K562 (cell line): ENCODE measurements at regions of chr20 and their contacts with region 1.

Region 1: DNA sequence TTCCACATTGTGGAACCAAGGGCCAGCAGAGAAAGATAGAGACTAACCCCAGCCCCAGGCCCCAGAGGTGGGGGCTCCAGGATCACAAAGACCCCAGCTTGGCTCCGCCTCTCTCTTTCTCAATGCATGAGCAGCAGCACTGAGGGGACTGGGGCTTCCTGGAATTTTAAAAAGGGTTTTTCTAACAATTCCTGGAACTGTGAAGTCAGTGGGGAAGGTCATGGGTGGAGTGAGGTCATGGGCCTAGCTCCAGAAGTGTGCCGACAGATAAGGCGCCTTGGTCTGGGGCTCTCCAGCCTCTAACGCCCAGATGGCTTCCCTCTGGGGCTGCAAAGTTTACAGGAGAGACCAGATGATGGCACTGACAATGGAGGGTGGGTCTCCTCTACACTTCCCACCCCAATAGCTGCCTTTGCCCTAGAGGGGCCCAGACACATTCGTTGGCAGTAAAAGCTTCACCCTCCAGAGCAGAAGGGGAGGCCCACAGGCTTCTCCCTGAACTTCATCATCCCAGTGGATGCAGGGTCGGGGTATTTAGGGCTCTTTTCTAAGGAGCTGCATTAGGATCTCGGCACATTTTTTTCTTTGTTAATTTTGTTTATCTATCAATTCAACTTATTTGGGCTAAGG is 46.9 kb upstream of the CD93 start:
- DNase-seq: peak; percentile 82 to 96 (median 84)
- ATAC-seq: peak; percentile 77
- H3K4me3 ChIP-seq: peak overlapping the region; percentile 1; the same call in 1 of the 2 replicates
- H3K27ac ChIP-seq: peak overlapping the region; percentile 100
- H3K4me1 ChIP-seq: peaks cover 58 to 63% of the 10 kb centered on the region in 2 experiments
- H3K27me3 ChIP-seq: no peaks in the 10 kb centered on the region
- CTCF ChIP-seq: no peak
- EP300 ChIP-seq: peak; percentile 97
- POLR2A ChIP-seq: peak; percentile 3; the same call in 1 of the 2 replicates
- RAD21 ChIP-seq: no peak; a peak in 1 of 4 replicates

Region 2: DNA sequence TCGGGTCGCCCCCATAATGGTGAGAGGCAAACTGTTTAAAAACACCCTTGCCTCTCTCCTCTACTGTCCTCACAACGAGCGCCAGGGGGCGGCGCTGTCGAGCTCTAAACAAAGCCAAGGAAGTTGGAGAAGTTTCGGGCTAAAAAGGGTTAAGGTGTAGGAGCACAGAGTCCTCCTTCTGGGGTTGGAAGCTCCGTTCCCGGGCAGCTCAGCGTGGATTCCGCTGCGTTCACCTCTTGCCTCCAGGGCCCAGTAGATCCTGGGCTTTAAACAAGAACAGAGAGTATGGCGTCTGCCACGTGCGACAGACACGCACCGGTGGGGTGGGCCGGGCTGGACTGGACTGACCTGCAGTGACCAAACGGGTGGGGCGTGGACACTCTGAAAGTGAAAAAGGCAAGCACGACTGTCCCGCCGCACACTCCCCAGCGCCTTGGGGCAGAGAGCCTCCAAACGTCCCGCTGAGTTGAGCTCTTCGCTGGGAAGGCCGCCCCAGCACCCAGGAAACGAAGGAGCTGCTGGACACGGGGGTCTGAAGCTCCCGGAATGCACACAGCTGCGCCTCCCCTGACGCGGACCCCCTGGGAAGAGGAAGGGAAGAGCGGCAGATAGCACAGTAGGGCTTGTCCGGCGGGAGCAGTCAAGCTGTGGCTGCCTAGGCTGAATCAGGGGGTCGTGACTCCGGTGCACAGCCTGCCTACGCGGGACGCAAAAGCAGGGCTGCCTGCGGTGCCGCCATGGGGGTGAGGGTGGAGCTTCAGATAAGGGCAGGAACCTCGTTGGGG is 82.0 kb before region 1 on chr20:
- CTCF ChIA-PET with region 1: no interaction called
- POLR2A ChIA-PET with region 1: interaction called, 5 read pairs
- in situ Hi-C with region 1: no loop called
- intact Hi-C with region 1: loop called (anchors 5 kb)
- DNase-seq: peak; percentile 61 to 92 (median 67)
- ATAC-seq: peak; percentile 91
- H3K4me3 ChIP-seq: peak overlapping the region; percentile 35
- H3K27ac ChIP-seq: peak overlapping the region; percentile 84
- H3K4me1 ChIP-seq: peaks cover 15 to 51% of the 10 kb centered on the region in 2 experiments; a peak in 4 of 5 replicates
- H3K27me3 ChIP-seq: no peaks in the 10 kb centered on the region
- CTCF ChIP-seq: peak; percentile 80 to 83 (median 80)
- EP300 ChIP-seq: no peak
- POLR2A ChIP-seq: peak; percentile 72
- RAD21 ChIP-seq: peak; percentile 72 to 89

Region 3: DNA sequence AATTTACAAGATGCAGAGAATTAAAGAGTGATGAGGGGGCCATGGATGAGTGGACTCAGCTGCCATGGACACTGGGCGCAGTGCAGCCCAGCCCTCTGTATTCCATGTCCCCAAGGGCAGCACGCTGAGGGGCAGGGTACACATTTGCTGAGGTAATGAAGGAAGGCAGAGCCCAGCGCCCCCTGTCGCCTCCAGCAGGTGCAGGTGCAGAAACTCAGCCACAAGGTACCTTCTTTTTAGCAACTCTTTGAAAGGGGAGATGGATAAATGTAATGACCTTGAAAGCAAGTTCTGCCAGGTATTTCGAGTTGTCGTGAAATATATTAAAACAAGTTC is 54.1 kb before region 1 on chr20:
- CTCF ChIA-PET with region 1: no interaction called
- POLR2A ChIA-PET with region 1: no interaction called
- in situ Hi-C with region 1: no loop called
- intact Hi-C with region 1: no loop called
- DNase-seq: peak in 3 of 4 experiments; percentile 31 to 63 (median 36)
- ATAC-seq: peak; percentile 89
- H3K4me3 ChIP-seq: no peak overlapping the region
- H3K27ac ChIP-seq: no peak overlapping the region
- H3K4me1 ChIP-seq: peaks cover 2 to 5% of the 10 kb centered on the region in 2 experiments; a peak in 2 of 5 replicates
- H3K27me3 ChIP-seq: no peaks in the 10 kb centered on the region
- CTCF ChIP-seq: peak; percentile 55 to 71 (median 64)
- EP300 ChIP-seq: no peak
- POLR2A ChIP-seq: no peak
- RAD21 ChIP-seq: peak in 1 of 2 experiments; percentile 38; a peak in 2 of 4 replicates

Region 4: DNA sequence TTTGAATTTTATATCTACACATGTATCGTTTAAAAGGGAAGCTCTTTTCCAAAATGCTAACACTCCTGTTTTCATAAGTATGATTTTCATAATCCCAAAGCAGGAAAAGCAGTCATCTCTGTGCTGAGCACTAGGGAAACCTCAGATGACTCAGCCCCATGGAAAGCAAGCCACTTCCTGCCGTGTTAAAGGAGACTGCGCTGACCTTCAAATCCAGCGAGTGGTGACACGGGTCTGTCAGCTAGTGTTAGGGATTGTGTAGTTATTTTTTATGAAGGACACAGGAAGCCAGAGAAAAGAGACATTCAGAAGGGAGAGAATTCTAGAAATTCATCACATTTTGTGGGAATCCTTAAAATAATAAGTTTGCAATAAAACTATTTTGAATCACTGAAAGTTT is 10.1 kb after region 1 on chr20:
- CTCF ChIA-PET with region 1: no interaction called
- POLR2A ChIA-PET with region 1: interaction called, 109 read pairs
- in situ Hi-C with region 1: no loop called
- intact Hi-C with region 1: loop called (anchors 2 kb)
- DNase-seq: peak in 3 of 4 experiments; percentile 39 to 85 (median 67)
- ATAC-seq: peak; percentile 70
- H3K4me3 ChIP-seq: no peak overlapping the region
- H3K27ac ChIP-seq: peak overlapping the region; percentile 82
- H3K4me1 ChIP-seq: peaks cover 51 to 90% of the 10 kb centered on the region in 2 experiments
- H3K27me3 ChIP-seq: no peaks in the 10 kb centered on the region
- CTCF ChIP-seq: no peak
- EP300 ChIP-seq: peak; percentile 59; the same call in 1 of the 2 replicates
- POLR2A ChIP-seq: no peak
- RAD21 ChIP-seq: no peak

Region 5: GRCh38 chr20:23156170-23156841 is 23.3 kb after region 1 on chr20:
- CTCF ChIA-PET with region 1: no interaction called
- POLR2A ChIA-PET with region 1: interaction called, 109 read pairs
- in situ Hi-C with region 1: no loop called
- intact Hi-C with region 1: no loop called
- DNase-seq: peak in 3 of 4 experiments; percentile 15 to 85 (median 62)
- ATAC-seq: peak; percentile 60
- H3K4me3 ChIP-seq: no peak overlapping the region
- H3K27ac ChIP-seq: peak overlapping the region; percentile 81
- H3K4me1 ChIP-seq: peaks cover 51 to 92% of the 10 kb centered on the region in 2 experiments
- H3K27me3 ChIP-seq: no peaks in the 10 kb centered on the region
- CTCF ChIP-seq: no peak
- EP300 ChIP-seq: peak; percentile 79
- POLR2A ChIP-seq: 0 out of 2 replicates have a peak, but pooled peaks have one; percentile 11
- RAD21 ChIP-seq: no peak